Mammary epithelial cell (primary cell): ENCODE measurements at regions of chr18 and their contacts with region 1.

Region 1: GRCh38 chr18:69985239-69985638 is 37.6 kb upstream of the CD226 start:
- DNase-seq: no peak
- H3K4me3 ChIP-seq: no peak overlapping the region
- H3K27ac ChIP-seq: no peak overlapping the region
- H3K4me1 ChIP-seq: no peaks in the 10 kb centered on the region
- H3K27me3 ChIP-seq: no peaks in the 10 kb centered on the region
- CTCF ChIP-seq: no peak

Region 2: DNA sequence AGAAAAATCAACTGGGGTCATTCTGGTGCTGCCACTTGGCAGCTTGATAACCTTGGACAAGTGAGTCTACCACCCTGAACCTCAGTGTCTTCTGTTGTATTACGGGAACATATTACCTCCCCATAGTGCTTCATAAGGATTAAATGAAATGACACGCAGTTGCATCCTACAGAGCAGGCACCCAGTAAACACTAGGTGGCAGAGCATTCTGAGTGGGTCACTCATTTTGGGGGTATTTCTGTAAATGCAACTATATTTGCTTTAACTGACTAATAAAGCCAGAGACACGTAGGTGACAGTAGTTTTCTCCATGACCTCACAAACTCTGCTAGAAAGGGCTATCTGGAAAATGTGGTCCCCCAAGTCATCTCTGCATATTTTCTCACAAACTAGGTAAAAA is 42.2 kb before region 1 on chr18:
- CTCF ChIA-PET with region 1: no interaction called
- dilution Hi-C with region 1: loop called (anchors 5 kb)
- in situ Hi-C with region 1: no loop called
- intact Hi-C with region 1: no loop called
- DNase-seq: no peak
- H3K4me3 ChIP-seq: no peak overlapping the region
- H3K27ac ChIP-seq: no peak overlapping the region
- H3K4me1 ChIP-seq: no peaks in the 10 kb centered on the region
- H3K27me3 ChIP-seq: no peaks in the 10 kb centered on the region
- CTCF ChIP-seq: no peak